Activated CD4-positive, alpha-beta memory T cell treated with anti-CD3 and anti-CD28 coated beads, Interleukin-2, amount 10 ng/mL, durations not matched to agents 7 days and 5 days (primary cell): ENCODE measurements at regions of chr6 and their contacts with region 1.

Region 1: DNA sequence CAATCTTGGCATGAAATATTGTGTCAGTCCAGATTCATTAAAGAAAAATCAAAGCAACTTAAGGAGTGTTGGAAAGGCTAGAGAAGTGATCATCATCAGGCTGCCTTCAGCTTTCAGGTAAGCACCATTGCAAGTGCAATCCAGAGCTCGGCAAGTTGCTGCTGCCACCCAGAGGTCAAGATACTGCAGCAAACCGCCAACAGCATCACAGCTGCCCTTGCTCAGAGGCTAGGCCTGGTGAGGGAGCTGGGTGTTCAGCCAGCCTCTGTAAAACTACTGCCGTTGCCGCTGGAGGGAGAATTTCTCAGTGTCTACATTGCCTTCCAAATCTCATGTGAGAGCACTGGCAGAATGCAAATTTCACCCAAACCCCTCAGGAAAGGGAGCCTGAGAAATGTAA is 5.8 kb upstream of the SYNE1 start:
- DNase-seq: peak; percentile 48
- H3K4me3 Mint-ChIP-seq: no peak overlapping the region
- H3K27ac Mint-ChIP-seq: no peak overlapping the region
- H3K4me1 Mint-ChIP-seq: peaks cover under 1% of the 10 kb centered on the region
- H3K27me3 Mint-ChIP-seq: peaks cover 25% of the 10 kb centered on the region

Region 2: DNA sequence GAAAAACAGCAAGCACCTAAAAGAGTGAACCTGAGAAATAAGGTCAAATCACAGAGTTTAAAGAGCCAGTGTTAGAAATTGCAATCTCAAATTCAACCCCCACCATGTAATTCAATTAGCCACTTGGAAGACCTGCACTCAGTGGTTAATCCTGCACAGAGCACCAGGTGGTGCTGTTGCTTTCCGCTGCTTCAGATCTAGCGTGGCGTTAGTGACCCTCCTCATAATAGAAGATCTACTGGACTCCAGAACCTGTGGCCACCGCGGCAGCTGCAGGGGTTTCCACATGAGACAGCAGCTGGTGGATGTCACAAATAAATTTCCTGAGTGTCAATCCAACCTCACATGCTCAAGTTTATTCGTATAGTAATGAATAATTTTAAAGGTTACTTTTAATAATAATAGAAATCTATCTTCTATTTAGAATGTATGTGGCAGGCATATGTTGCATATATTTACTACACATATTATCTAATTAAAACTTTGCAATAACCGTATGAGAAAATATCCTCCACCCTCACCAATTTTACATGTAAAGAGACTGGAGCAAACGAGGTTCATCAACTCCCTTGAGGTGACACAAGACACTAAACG is 90.3 kb before region 1 on chr6:
- CTCF ChIA-PET with region 1: interaction called, 17 read pairs
- POLR2A ChIA-PET with region 1: no interaction called
- DNase-seq: peak; percentile 37
- H3K4me3 Mint-ChIP-seq: no peak overlapping the region
- H3K27ac Mint-ChIP-seq: no peak overlapping the region
- H3K4me1 Mint-ChIP-seq: no peaks in the 10 kb centered on the region
- H3K27me3 Mint-ChIP-seq: peaks cover 3% of the 10 kb centered on the region

Region 3: GRCh38 chr6:152625213-152625612 is 17.8 kb before region 1 on chr6:
- CTCF ChIA-PET with region 1: no interaction called
- POLR2A ChIA-PET with region 1: no interaction called
- DNase-seq: peak; percentile 24
- H3K4me3 Mint-ChIP-seq: no peak overlapping the region
- H3K27ac Mint-ChIP-seq: no peak overlapping the region
- H3K4me1 Mint-ChIP-seq: peaks cover 4% of the 10 kb centered on the region
- H3K27me3 Mint-ChIP-seq: peaks cover 11% of the 10 kb centered on the region